MCF 10A (cell line): ENCODE measurements at regions of chr13 and their contacts with region 1.

Region 1: GRCh38 chr13:23960566-23961156 is 63.4 kb upstream of the C1QTNF9B start:
- DNase-seq: peak; percentile 65
- H3K4me3 Mint-ChIP-seq: no peak overlapping the region
- H3K27ac Mint-ChIP-seq: no peak overlapping the region
- H3K4me1 Mint-ChIP-seq: peaks cover 28% of the 10 kb centered on the region
- H3K27me3 Mint-ChIP-seq: no peaks in the 10 kb centered on the region
- CTCF ChIP-seq: peak; percentile 57

Region 2: GRCh38 chr13:23888658-23889614 is 71.7 kb before region 1 on chr13 and contains the start of gene MIPEP:
- CTCF ChIA-PET with region 1: interaction called, 20 read pairs
- POLR2A ChIA-PET with region 1: interaction called, 8 read pairs
- intact Hi-C with region 1: no loop called
- DNase-seq: peak; percentile 95
- H3K4me3 Mint-ChIP-seq: peak within 1 kb of the TSS; percentile 89
- H3K27ac Mint-ChIP-seq: peak within 1 kb of the TSS; percentile 67
- H3K4me1 Mint-ChIP-seq: peaks cover 11% of the 10 kb centered on the region
- H3K27me3 Mint-ChIP-seq: no peaks in the 10 kb centered on the region
- CTCF ChIP-seq: peak; percentile 58
- total RNA-seq, gene MIPEP: 19.1 and 24.7 TPM in 2 replicates

Region 3: DNA sequence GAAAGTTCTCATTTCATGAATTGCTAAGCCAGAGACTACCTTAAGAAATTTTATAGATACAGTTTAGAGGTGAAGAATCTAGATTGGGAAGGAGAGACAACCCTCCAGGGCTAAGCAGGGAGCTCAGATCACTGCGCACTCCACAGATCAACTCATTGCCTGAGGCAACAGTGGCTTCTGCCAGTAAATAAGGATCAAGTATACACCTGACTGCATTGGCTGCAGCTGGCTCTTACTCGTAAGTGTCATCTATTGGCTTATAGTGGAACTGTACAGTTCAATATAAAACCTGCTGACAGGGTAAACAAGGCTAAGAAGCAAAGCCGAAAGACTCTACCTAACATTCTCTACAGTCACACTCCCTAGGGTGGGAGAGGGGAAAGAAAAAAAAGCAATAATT is 45.4 kb before region 1 on chr13:
- CTCF ChIA-PET with region 1: interaction called, 54 read pairs
- POLR2A ChIA-PET with region 1: interaction called, 6 read pairs
- intact Hi-C with region 1: no loop called
- DNase-seq: peak; percentile 25
- H3K4me3 Mint-ChIP-seq: no peak overlapping the region
- H3K27ac Mint-ChIP-seq: no peak overlapping the region
- H3K4me1 Mint-ChIP-seq: peaks cover 6% of the 10 kb centered on the region
- H3K27me3 Mint-ChIP-seq: peaks cover 64% of the 10 kb centered on the region
- CTCF ChIP-seq: no peak

Region 4: GRCh38 chr13:23934520-23934919 is 26.1 kb before region 1 on chr13:
- CTCF ChIA-PET with region 1: interaction called, 10 read pairs
- POLR2A ChIA-PET with region 1: interaction called, 5 read pairs
- intact Hi-C with region 1: no loop called
- DNase-seq: no peak
- H3K4me3 Mint-ChIP-seq: no peak overlapping the region
- H3K27ac Mint-ChIP-seq: no peak overlapping the region
- H3K4me1 Mint-ChIP-seq: peaks cover 7% of the 10 kb centered on the region
- H3K27me3 Mint-ChIP-seq: peaks cover 23% of the 10 kb centered on the region
- CTCF ChIP-seq: no peak

Region 5: DNA sequence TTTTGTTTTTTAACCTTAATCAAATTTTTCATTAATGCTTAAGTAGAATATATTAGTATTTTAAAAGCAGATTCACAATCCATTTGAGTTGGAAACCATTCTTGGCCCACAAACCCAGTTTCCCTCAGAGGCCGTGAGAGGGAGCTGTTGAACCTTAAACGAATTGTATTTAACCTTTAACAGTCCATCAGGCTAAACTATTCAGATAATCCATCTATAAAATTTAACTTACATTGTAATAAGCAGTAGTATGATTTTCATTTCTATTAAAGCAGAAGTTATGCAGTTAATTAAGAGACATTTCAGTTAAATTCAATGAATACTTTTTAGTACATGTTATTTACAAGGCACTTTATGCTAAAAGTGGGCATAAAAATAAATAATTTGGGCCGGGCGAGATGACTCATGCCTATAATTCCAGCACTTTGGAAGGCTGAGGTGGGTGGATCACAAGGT is 59.7 kb after region 1 on chr13:
- CTCF ChIA-PET with region 1: interaction called, 10 read pairs
- POLR2A ChIA-PET with region 1: no interaction called
- intact Hi-C with region 1: no loop called
- DNase-seq: peak; percentile 73
- H3K4me3 Mint-ChIP-seq: no peak overlapping the region
- H3K27ac Mint-ChIP-seq: no peak overlapping the region
- H3K4me1 Mint-ChIP-seq: no peaks in the 10 kb centered on the region
- H3K27me3 Mint-ChIP-seq: no peaks in the 10 kb centered on the region
- CTCF ChIP-seq: peak; percentile 57